Activated naive CD4-positive, alpha-beta T cell treated with anti-CD3 and anti-CD28 coated beads for 36 hours (primary cell): ENCODE measurements at regions of chr3 and their contacts with region 1.

Region 1: GRCh38 chr3:15629860-15630597 is 28.5 kb downstream of the BTD start:
- DNase-seq: peak; percentile 84
- H3K4me3 Mint-ChIP-seq: peak overlapping the region; percentile 37
- H3K27ac Mint-ChIP-seq: peak overlapping the region; percentile 28
- H3K4me1 Mint-ChIP-seq: peaks cover 46% of the 10 kb centered on the region
- H3K27me3 Mint-ChIP-seq: no peaks in the 10 kb centered on the region

Region 2: GRCh38 chr3:15778332-15778858 is 148.4 kb after region 1 on chr3:
- CTCF ChIA-PET with region 1: interaction called, 4 read pairs
- intact Hi-C with region 1: loop called (anchors 1 kb)
- DNase-seq: no peak
- H3K4me3 Mint-ChIP-seq: no peak overlapping the region
- H3K27ac Mint-ChIP-seq: no peak overlapping the region
- H3K4me1 Mint-ChIP-seq: peaks cover 30% of the 10 kb centered on the region
- H3K27me3 Mint-ChIP-seq: no peaks in the 10 kb centered on the region

Region 3: DNA sequence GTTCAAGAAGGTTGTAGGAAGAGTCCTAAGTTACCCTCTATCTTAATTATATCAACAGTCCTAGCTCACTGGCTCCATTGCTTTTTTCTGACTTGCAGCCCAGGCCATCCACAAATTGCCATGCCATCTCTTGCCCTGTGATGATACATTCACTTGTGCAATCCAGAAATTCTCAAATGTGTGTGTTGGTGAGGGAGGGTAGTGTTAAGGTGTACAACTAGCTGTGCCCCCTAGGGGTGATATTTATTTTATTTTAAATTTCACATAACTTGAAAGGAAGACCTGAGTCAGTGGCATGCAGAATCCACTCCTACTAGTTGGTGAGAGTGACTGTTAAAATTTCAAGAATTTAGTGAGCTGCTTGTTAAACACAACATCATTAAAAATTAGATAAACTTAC is 323.8 kb after region 1 on chr3:
- CTCF ChIA-PET with region 1: interaction called, 4 read pairs
- intact Hi-C with region 1: loop called (anchors 5 kb)
- DNase-seq: no peak
- H3K4me3 Mint-ChIP-seq: no peak overlapping the region
- H3K27ac Mint-ChIP-seq: no peak overlapping the region
- H3K4me1 Mint-ChIP-seq: no peaks in the 10 kb centered on the region
- H3K27me3 Mint-ChIP-seq: no peaks in the 10 kb centered on the region

Region 4: DNA sequence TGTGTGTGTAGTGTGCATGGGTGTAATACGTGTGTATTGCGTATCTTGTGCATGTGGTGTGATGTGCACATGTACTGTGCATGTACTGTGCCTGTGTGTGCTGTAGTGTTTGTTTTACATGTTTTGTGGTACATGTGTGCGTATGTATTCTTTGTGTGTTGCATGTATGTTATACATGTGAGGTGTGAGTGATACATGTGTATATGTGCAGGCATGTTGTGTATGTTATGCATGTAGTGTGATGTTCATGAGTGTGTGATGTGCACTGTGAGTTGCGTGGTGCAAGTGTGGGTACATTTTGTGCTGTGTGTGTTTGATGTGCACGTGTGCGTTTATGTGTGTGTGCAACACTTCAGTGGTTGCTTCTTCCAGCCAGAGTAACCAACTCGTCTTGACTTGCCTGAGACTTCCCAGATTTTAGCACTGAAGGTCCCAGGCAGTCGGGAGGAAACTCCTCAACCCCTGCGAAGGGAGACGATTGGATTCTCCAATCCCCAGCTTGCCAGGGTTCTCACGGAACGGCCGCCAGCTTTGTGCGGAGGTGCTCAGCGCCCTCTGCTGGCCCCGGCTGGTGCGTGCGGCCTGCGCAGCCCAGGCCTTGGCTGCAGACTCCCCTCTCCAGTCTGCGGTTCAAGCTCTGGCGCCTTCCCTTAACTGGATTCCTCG is 548.1 kb after region 1 on chr3:
- CTCF ChIA-PET with region 1: no interaction called
- intact Hi-C with region 1: loop called (anchors 5 kb)
- DNase-seq: peak; percentile 73
- H3K4me3 Mint-ChIP-seq: no peak overlapping the region
- H3K27ac Mint-ChIP-seq: no peak overlapping the region
- H3K4me1 Mint-ChIP-seq: peaks cover 2% of the 10 kb centered on the region
- H3K27me3 Mint-ChIP-seq: peaks cover 7% of the 10 kb centered on the region